ENCODE measurements at regions of chr18 and their contacts with region 1.

Region 1: GRCh38 chr18:45722899-45723298 is 1.1 kb upstream of the SLC14A1 start:
- DNase-seq: peak; percentile 81 to 87 (median 86)
- ATAC-seq: peak; percentile 97 to 100 (median 98)
- H3K4me3 ChIP-seq: no peak overlapping the region
- H3K27ac ChIP-seq: no peak overlapping the region
- H3K4me1 ChIP-seq: no peaks in the 10 kb centered on the region
- H3K27me3 ChIP-seq: no peaks in the 10 kb centered on the region
- CTCF ChIP-seq: peak; percentile 66 to 84 (median 74)
- POLR2A ChIP-seq: no peak

Region 2: DNA sequence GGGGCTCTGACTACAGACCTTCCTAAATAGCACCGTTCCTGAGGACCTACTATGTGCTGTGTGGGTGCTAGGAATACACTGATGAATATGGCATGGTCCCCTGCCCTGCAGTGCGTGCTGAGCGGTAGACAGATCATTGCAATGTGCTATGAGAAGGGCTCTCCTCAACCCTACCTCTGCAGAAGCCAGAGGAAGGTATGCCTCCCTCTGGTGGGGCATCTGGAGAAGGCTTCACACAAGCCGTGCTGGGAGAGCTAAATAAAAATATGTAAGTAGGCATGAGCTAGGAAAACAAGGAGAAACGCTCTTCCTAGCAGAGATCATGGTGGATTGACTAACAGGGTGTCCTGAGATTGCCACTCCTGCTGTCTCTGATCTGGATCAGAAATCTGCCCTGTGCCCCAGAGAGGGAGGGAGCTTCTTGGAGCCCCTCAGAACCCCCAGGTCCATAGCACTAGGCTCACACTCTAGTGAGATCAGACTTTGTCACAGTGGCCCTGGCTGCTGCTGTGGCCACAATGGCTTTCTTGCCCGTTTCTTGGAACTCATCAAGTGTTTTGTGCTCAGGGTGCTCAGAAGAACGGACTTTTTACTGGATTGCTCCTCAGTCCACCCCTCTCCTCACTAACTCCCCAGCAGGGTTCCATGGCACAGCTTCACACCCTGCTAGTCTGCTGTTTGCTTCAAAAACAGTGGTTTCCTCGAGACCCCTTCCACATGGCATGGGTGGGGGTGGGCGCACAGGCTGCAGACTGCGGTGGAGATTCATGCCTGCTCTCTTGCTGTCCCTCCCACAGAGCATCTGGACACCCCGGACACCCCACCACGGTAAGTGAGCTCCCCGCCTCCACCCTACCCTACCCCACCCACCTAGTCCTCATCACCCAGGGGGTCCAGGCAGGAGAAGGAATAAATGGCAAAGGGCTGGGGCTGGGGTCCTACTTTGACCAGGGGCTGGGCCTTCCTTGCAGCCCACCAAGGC is 116.8 kb after region 1 on chr18:
- intact Hi-C with region 1: loop called (anchors 10 kb)
- DNase-seq: peak in 2 of 3 donors; percentile 61 to 69
- ATAC-seq: peak; percentile 74 to 88 (median 82)
- H3K4me3 ChIP-seq: no peak overlapping the region
- H3K27ac ChIP-seq: no peak overlapping the region
- H3K4me1 ChIP-seq: peaks cover 0 to 9% (median 0%) of the 10 kb centered on the region in 4 donors
- H3K27me3 ChIP-seq: no peaks in the 10 kb centered on the region
- CTCF ChIP-seq: peak; percentile 62 to 67 (median 65)
- POLR2A ChIP-seq: no peak

Measured in right lobe of liver (tissue), 6 donors.